HCT116 (cell line): ENCODE measurements at regions of chrX and their contacts with region 1.

Region 1: DNA sequence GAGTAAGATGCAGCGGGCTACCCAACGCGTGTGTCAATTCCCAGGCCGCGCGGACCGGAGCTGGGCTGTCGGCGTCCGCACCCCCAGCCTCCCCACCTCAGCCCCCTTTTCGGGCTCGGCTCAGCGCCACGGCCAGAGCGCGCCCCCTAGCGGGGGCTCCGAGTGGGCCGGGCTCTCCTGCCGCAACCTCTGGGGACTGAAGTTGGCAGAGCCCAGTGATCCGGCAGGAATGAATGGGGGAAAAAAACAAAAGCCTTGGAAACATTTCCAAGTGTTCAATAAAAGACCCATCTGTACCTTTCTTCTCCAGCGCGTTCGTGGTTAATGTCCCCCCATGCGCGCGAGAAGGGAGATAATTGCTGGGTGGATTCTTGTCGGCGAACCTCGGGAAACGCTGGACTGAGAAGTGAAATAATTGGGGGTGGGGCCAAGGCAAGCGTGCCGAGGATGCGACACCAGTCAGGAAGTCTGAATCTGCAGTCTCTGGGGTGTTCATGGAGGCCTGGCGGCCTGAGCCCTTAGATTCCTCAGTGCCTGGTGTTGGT is 5.2 kb upstream of the ARX start:
- DNase-seq: no peak
- ATAC-seq: peak; percentile 90
- H3K4me3 ChIP-seq: peak overlapping the region; percentile 40 to 54
- H3K27ac ChIP-seq: no peak overlapping the region
- H3K4me1 ChIP-seq: peaks cover 3 to 11% of the 10 kb centered on the region in 2 experiments; a peak in 3 of 4 replicates
- H3K27me3 ChIP-seq: no peaks in the 10 kb centered on the region
- CTCF ChIP-seq: peak; percentile 41 to 81 (median 67); a peak in 5 of 6 replicates
- POLR2A ChIP-seq: no peak
- RAD21 ChIP-seq: peak; percentile 63

Region 2: GRCh38 chrX:24435060-24435459 is 585.9 kb before region 1 on chrX:
- CTCF ChIA-PET with region 1: no interaction called
- POLR2A ChIA-PET with region 1: no interaction called
- RAD21 ChIA-PET with region 1: no interaction called
- intact Hi-C with region 1: no loop called
- DNase-seq: no peak
- ATAC-seq: no peak
- H3K4me3 ChIP-seq: no peak overlapping the region
- H3K27ac ChIP-seq: no peak overlapping the region
- H3K4me1 ChIP-seq: no peaks in the 10 kb centered on the region
- H3K27me3 ChIP-seq: no peaks in the 10 kb centered on the region
- CTCF ChIP-seq: no peak
- POLR2A ChIP-seq: no peak
- RAD21 ChIP-seq: no peak

Region 3: DNA sequence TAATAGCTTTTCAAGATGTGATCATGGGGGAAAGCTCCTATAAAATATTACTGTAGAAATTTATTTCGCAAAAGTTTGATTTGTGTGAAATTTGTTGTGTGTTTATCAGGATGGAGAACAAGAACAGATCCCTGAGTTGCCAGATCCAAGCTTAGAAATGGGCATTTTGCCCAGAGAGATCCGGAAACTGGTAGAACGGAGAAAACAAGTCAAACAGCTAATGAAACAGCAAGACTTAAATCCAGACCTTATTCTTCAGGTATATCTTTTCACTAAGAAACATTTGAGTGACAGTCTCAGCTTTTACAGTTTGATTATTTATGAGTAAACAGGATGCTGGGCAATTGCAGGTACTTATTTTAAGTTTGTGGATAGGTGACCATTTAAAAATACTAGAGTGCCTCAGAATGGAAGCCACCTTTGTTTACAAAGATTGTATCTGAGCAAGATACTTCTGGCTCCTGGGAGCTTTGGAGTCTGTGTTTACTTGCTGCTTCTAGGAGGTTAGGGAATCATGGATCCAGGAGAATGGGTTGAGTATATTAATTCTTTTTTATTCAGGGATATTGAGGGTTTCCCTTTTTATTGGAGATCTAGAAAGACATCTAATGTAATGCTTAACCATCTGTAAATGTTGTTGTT is 272.7 kb before region 1 on chrX:
- CTCF ChIA-PET with region 1: no interaction called
- POLR2A ChIA-PET with region 1: no interaction called
- RAD21 ChIA-PET with region 1: no interaction called
- intact Hi-C with region 1: loop called (anchors 2 kb)
- DNase-seq: no peak
- ATAC-seq: no peak
- H3K4me3 ChIP-seq: no peak overlapping the region
- H3K27ac ChIP-seq: no peak overlapping the region
- H3K4me1 ChIP-seq: no peaks in the 10 kb centered on the region
- H3K27me3 ChIP-seq: no peaks in the 10 kb centered on the region
- CTCF ChIP-seq: no peak
- POLR2A ChIP-seq: no peak
- RAD21 ChIP-seq: no peak

Region 4: DNA sequence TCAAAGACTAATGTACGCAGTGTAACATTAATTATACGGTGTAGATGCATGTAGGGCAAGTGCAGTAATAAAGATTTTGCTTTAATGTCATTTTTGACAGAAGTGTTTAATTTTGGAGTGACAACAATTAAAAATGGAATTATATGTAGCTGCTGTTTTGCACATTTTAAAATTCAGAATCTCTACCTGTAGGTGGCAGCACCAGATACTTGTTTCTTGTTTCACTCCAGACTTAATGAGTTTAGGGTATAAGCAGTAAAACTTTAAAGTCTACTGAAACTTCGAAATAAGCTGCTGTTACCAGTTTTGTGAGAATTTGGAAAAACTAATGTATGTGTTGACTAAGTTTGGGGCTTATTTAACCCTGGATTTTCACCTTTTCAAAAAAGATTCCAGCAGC is 182.3 kb before region 1 on chrX:
- CTCF ChIA-PET with region 1: interaction called, 6 read pairs
- POLR2A ChIA-PET with region 1: no interaction called
- RAD21 ChIA-PET with region 1: no interaction called
- intact Hi-C with region 1: loop called (anchors 2 kb)
- DNase-seq: no peak
- ATAC-seq: no peak
- H3K4me3 ChIP-seq: no peak overlapping the region
- H3K27ac ChIP-seq: no peak overlapping the region
- H3K4me1 ChIP-seq: no peaks in the 10 kb centered on the region
- H3K27me3 ChIP-seq: no peaks in the 10 kb centered on the region
- CTCF ChIP-seq: peak; percentile 23 to 53 (median 29); a peak in 3 of 6 replicates
- POLR2A ChIP-seq: no peak
- RAD21 ChIP-seq: peak; percentile 44